ENCODE measurements at regions of chr4 and their contacts with region 1.

Region 1: GRCh38 chr4:52837726-52838558 is 24.2 kb upstream of the RASL11B start:
- DNase-seq: peak; percentile 91
- H3K4me3 Mint-ChIP-seq: peak overlapping the region; percentile 60
- H3K27ac Mint-ChIP-seq: peak overlapping the region; percentile 92
- H3K4me1 Mint-ChIP-seq: peaks cover 47% of the 10 kb centered on the region
- H3K27me3 Mint-ChIP-seq: no peaks in the 10 kb centered on the region
- CTCF ChIP-seq: no peak

Region 2: DNA sequence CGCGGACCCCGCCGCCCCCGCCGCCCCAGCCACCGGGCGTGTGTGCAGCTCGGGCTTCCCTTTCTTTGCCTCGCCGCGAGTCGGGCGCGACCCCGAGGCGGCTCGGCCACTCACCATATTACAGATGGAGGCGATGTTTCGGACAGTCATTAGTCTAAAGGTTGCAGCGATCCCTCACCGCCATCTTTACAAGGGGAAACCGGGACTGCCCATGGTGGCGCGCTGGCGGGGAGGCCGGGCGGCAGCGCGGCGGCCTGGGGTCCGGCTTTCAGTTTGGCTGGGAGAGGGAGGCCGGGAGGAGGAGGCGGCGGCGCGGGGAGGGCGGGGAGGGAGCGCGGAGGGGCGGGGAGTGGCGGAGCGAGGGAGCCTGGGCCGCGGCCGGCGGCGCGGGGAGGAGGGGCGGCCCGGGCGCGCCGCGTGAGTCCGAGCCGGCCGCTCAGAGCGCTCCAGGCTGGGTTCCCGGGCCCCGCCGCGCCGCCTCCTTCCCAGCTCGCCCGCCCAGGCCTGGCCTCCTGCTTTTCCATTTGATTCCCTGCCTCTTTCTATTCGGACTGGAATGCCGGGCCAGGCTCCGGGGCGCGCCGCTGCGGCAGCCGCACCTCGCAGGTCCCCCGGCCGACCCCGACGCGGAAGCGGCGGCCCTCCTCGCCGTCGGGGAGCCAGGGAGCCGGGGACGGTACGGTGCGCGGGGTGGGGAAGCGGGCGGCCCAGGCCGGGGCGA is 178.8 kb before region 1 on chr4 and contains the start of gene USP46:
- CTCF ChIA-PET with region 1: no interaction called
- POLR2A ChIA-PET with region 1: interaction called, 3 read pairs
- intact Hi-C with region 1: loop called (anchors 10 kb)
- DNase-seq: peak; percentile 76
- H3K4me3 Mint-ChIP-seq: peak within 1 kb of the TSS; percentile 77
- H3K27ac Mint-ChIP-seq: peak within 1 kb of the TSS; percentile 26
- H3K4me1 Mint-ChIP-seq: peaks cover 34% of the 10 kb centered on the region
- H3K27me3 Mint-ChIP-seq: no peaks in the 10 kb centered on the region
- CTCF ChIP-seq: no peak
- total RNA-seq, gene USP46: 16.8 and 23.0 TPM in 2 replicates

Region 3: GRCh38 chr4:52721968-52722815 is 115.8 kb before region 1 on chr4:
- CTCF ChIA-PET with region 1: no interaction called
- POLR2A ChIA-PET with region 1: interaction called, 10 read pairs
- intact Hi-C with region 1: no loop called
- DNase-seq: peak; percentile 98
- H3K4me3 Mint-ChIP-seq: peak overlapping the region; percentile 72
- H3K27ac Mint-ChIP-seq: peak overlapping the region; percentile 11
- H3K4me1 Mint-ChIP-seq: no peaks in the 10 kb centered on the region
- H3K27me3 Mint-ChIP-seq: no peaks in the 10 kb centered on the region
- CTCF ChIP-seq: no peak

Region 4: GRCh38 chr4:52824603-52825459 is 13.1 kb before region 1 on chr4:
- CTCF ChIA-PET with region 1: interaction called, 5 read pairs
- POLR2A ChIA-PET with region 1: interaction called, 124 read pairs
- intact Hi-C with region 1: no loop called
- DNase-seq: no peak
- H3K4me3 Mint-ChIP-seq: no peak overlapping the region
- H3K27ac Mint-ChIP-seq: peak overlapping the region; percentile 92
- H3K4me1 Mint-ChIP-seq: peaks cover 38% of the 10 kb centered on the region
- H3K27me3 Mint-ChIP-seq: no peaks in the 10 kb centered on the region
- CTCF ChIP-seq: no peak

Region 5: DNA sequence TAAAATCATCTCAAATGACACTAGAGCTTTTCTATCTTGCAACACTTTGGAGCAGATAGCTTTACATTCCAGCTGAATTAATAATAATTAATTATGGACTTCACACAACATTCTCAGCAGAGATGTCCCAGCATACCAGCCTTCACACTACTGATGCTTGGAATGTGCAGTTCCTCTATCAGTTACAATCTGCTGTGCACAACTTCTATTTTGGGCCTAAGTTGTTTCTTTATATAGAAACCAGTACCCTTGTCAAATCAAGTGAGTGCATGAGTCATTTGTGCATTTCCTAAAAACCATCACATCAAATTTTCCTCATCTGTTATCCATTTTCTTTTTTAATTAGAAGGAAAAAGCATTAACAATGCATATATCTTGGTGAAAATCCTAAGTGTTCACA is 15.4 kb after region 1 on chr4:
- CTCF ChIA-PET with region 1: interaction called, 10 read pairs
- POLR2A ChIA-PET with region 1: interaction called, 27 read pairs
- intact Hi-C with region 1: no loop called
- DNase-seq: no peak
- H3K4me3 Mint-ChIP-seq: no peak overlapping the region
- H3K27ac Mint-ChIP-seq: no peak overlapping the region
- H3K4me1 Mint-ChIP-seq: no peaks in the 10 kb centered on the region
- H3K27me3 Mint-ChIP-seq: no peaks in the 10 kb centered on the region
- CTCF ChIP-seq: no peak

Region 6: DNA sequence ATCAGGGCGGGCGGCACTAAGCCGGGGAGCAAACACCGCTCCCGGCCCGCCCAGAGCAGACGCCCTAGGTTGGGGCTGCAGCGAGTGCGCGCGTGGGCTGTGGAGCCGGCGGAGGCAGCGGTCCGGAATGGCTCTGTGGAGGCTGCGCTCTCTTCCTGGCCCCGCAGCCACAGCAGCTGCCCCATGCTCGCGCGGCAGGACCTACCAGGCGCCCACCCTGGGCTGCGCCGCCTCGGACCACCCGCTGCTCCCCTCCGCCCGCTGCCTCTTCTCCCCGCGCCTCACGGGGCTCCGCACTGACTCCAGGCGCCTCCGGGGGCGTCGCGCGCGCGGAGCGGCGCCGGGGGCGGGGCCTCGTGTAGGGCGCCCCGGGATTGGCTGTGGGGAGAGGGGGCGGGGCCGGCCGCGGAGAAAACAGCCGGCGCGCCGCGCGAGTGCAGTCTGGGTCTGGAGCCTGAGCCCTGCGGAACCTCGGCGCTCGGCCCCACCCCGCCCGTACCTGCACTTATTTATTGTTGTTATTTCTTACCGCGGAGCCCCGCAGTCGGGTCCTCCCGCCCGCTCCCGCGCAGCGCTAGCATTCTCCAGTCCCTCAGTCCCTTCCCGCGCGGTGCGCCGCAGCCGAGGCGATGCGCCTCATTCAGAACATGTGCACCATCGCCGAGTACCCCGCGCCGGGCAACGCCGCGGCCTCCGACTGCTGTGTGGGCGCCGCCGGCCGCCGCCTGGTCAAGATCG is 24.1 kb after region 1 on chr4 and contains the start of gene RASL11B:
- CTCF ChIA-PET with region 1: interaction called, 6 read pairs
- POLR2A ChIA-PET with region 1: interaction called, 6 read pairs
- intact Hi-C with region 1: loop called (anchors 2 kb)
- DNase-seq: peak; percentile 80
- H3K4me3 Mint-ChIP-seq: peak within 1 kb of the TSS; percentile 81
- H3K27ac Mint-ChIP-seq: no peak within 1 kb of the TSS
- H3K4me1 Mint-ChIP-seq: peaks cover 16% of the 10 kb centered on the region
- H3K27me3 Mint-ChIP-seq: no peaks in the 10 kb centered on the region
- CTCF ChIP-seq: no peak
- total RNA-seq, gene RASL11B: 1.7 and 2.6 TPM in 2 replicates

Region 7: GRCh38 chr4:54118850-54119589 is 1281.1 kb after region 1 on chr4:
- CTCF ChIA-PET with region 1: no interaction called
- POLR2A ChIA-PET with region 1: no interaction called
- intact Hi-C with region 1: no loop called
- DNase-seq: no peak
- H3K4me3 Mint-ChIP-seq: no peak overlapping the region
- H3K27ac Mint-ChIP-seq: no peak overlapping the region
- H3K4me1 Mint-ChIP-seq: no peaks in the 10 kb centered on the region
- H3K27me3 Mint-ChIP-seq: no peaks in the 10 kb centered on the region
- CTCF ChIP-seq: no peak